ENCODE measurements at regions of chr6 and their contacts with region 1.

Region 1: GRCh38 chr6:31366693-31367470 is 9.9 kb upstream of the HLA-B start:
- DNase-seq: peak; percentile 86
- ATAC-seq: peak; percentile 100
- H3K4me3 ChIP-seq: peak overlapping the region; percentile 21 to 49
- H3K27ac ChIP-seq: no peak overlapping the region
- H3K4me1 ChIP-seq: no peaks in the 10 kb centered on the region
- H3K27me3 ChIP-seq: peaks cover 37% of the 10 kb centered on the region
- CTCF ChIP-seq: peak; percentile 94

Region 2: DNA sequence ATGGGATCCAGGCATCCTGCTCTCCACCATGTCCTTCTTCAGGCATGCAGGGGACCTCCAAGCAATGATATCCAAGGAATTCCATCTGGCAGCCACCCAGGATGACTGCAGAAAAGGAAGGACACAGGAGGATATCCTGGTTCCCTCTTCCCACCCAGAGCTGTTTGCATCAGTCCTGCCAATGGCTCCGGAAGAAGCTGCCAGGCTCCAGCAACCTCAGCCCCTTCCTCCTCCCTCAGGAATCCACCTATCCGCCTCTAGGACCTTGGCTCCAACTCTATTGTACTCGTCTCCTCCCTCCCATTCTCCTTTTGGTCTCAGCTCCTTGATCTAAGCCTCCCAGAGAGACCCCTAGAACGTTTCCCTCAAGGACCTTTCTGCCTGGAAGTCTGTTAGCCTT is 227.3 kb before region 1 on chr6:
- CTCF ChIA-PET with region 1: interaction called, 4 read pairs
- POLR2A ChIA-PET with region 1: no interaction called
- in situ Hi-C with region 1: no loop called
- intact Hi-C with region 1: loop called (anchors 5 kb)
- DNase-seq: no peak
- ATAC-seq: no peak
- H3K4me3 ChIP-seq: no peak overlapping the region
- H3K27ac ChIP-seq: no peak overlapping the region
- H3K4me1 ChIP-seq: no peaks in the 10 kb centered on the region
- H3K27me3 ChIP-seq: no peaks in the 10 kb centered on the region
- CTCF ChIP-seq: no peak

Region 3: GRCh38 chr6:31197559-31198305 is 169.2 kb before region 1 on chr6:
- CTCF ChIA-PET with region 1: interaction called, 8 read pairs
- POLR2A ChIA-PET with region 1: no interaction called
- in situ Hi-C with region 1: no loop called
- intact Hi-C with region 1: loop called (anchors 2 kb)
- DNase-seq: peak; percentile 53
- ATAC-seq: peak; percentile 93
- H3K4me3 ChIP-seq: peak overlapping the region; percentile 79 to 86
- H3K27ac ChIP-seq: peak overlapping the region; percentile 88
- H3K4me1 ChIP-seq: peaks cover 4% of the 10 kb centered on the region
- H3K27me3 ChIP-seq: no peaks in the 10 kb centered on the region
- CTCF ChIP-seq: no peak

Region 4: DNA sequence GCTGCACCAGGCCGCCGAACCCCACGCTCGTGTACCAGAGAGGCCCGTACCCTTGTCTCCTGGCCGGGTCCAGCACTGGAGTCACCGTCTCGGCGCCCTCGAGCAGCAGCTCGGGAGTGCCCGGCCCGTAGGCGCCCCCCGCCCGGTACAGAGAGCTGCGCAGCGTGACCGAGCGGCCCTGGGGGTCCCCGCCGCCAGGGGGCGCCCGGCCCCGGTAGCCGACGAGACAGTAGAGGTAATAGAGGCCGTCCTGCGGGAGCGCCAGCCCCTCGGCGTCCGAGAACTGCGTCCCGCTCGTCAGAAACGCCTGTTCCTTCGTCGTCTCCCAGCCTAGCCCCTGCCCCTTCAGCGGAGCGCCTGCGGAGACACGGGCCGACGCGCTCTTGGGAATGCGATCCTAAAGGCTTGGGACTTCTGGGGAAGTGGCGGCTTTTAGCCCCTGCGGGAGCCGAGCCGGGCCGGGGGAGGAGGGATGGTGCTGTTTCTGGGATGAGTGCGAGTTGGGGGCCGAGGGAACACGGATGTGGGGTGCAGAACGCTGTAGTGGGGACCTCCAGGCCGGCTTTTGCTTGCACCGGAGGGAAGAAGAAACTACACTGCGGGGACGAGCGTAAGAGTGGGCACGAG is 214.0 kb after region 1 on chr6:
- CTCF ChIA-PET with region 1: no interaction called
- POLR2A ChIA-PET with region 1: no interaction called
- in situ Hi-C with region 1: no loop called
- intact Hi-C with region 1: no loop called
- DNase-seq: no peak
- ATAC-seq: peak; percentile 92
- H3K4me3 ChIP-seq: peak overlapping the region; percentile 78 to 80
- H3K27ac ChIP-seq: peak overlapping the region; percentile 84
- H3K4me1 ChIP-seq: peaks cover 22% of the 10 kb centered on the region
- H3K27me3 ChIP-seq: no peaks in the 10 kb centered on the region
- CTCF ChIP-seq: peak; percentile 99

Region 5: DNA sequence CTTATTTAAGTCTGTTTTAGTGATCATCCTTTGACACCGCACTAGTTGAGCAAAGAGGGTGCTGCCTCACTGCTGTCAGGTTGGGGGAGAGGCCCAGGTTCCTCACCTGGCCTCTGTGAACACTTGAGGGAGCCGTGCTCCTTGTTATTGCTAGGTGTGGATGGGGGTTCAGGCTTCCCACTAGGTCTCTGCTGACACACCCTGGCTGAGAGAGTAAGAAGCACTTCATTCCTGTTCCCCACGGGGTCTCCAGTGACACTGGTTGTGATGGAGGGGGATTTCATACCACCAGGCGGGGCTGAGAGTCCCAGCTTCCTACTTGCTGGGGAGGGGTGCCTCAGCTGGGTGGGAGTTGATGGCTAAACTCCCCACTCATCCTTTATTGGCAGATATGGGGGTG is 868.1 kb after region 1 on chr6:
- CTCF ChIA-PET with region 1: no interaction called
- POLR2A ChIA-PET with region 1: no interaction called
- in situ Hi-C with region 1: no loop called
- intact Hi-C with region 1: no loop called
- DNase-seq: no peak
- ATAC-seq: no peak
- H3K4me3 ChIP-seq: no peak overlapping the region
- H3K27ac ChIP-seq: no peak overlapping the region
- H3K4me1 ChIP-seq: no peaks in the 10 kb centered on the region
- H3K27me3 ChIP-seq: no peaks in the 10 kb centered on the region
- CTCF ChIP-seq: 0 out of 2 replicates have a peak, but pooled peaks have one; percentile 27

Measured in Panc1 (cell line).